Ascending aorta (tissue), 2 donors: ENCODE measurements at regions of chr11 and their contacts with region 1.

Region 1: GRCh38 chr11:62004473-62004872 is 37.0 kb upstream of the FTH1 start:
- DNase-seq: peak; percentile 59 to 91
- H3K4me3 ChIP-seq: no peak overlapping the region
- H3K27ac ChIP-seq: peak overlapping the region; percentile 75 to 78
- H3K4me1 ChIP-seq: peaks cover 0 to 10% of the 10 kb centered on the region in 2 donors
- H3K27me3 ChIP-seq: no peaks in the 10 kb centered on the region
- CTCF ChIP-seq: no peak

Region 2: DNA sequence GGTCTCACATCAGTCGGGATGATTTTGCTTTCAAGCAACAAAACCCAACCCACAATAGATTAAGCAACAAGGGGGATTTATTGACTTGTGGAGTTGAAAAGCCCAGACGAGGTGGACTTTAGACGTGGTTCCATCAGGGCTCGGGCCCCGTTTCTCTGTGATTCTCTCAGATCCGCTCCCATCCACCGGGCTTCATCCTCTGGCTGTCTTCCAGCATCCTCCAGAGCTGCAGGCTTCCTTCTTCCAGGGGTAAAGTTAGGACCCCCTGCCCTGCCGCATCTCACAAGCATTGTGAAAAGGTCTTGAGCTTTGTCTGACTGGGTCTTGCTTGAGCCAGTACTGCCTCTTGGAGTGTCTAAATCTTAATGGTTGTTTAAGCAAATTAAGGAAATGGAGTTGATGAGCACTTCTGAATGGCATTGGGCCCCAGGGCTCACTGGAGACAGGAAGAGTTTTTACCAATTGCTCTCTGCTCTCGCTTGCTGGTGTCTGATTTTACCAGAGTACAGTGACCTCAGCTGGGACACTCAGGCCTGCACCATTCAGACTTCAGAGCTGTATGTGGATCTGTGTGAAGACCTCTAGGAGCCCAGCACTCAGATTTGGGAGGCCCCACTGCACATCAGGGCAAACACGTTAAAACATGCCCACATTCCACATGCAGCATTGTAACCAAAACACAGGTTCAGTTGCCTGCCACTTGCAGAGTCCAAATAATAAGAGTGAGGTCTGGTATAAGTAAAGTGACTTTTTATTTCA is 23.5 kb before region 1 on chr11:
- intact Hi-C with region 1: loop called (anchors 2 kb)
- DNase-seq: no peak
- H3K4me3 ChIP-seq: no peak overlapping the region
- H3K27ac ChIP-seq: no peak overlapping the region
- H3K4me1 ChIP-seq: peaks cover 12 to 15% of the 10 kb centered on the region in 2 donors
- H3K27me3 ChIP-seq: no peaks in the 10 kb centered on the region
- CTCF ChIP-seq: no peak